AG04449 (cell line): ENCODE measurements at regions of chr1 and their contacts with region 1.

Region 1: DNA sequence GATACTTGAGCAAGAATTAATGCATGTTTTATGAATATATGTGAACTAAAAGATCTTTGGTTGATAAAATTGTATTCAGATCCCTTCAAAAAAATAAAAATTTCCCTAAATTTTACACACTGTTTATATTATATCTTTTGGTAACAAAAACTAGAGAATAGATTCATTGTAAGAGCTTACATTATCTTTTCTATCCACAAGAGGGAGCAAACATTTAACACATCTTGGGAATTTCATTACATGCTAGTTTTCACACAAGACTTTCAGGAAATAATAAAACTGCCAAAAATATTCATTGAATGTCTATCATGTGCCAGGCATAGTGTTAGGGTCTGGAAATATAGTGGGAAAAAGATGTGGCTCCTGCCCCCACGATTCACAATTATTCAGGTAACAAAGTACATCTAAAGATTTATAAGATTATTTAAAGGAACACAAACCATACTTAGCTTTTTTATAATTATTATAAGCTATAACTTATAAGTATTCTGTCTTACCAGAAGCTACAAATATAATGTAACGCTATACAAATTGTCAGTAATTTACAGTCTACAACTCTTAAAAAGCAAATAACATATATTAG is 30.6 kb downstream of the FAF1 start:
- DNase-seq: peak; percentile 5
- H3K4me3 ChIP-seq: no peak overlapping the region
- CTCF ChIP-seq: peak; percentile 20

Region 2: GRCh38 chr1:50774759-50775351 is 154.6 kb before region 1 on chr1:
- CTCF ChIA-PET with region 1: interaction called, 17 read pairs
- POLR2A ChIA-PET with region 1: no interaction called
- DNase-seq: peak; percentile 19
- H3K4me3 ChIP-seq: no peak overlapping the region
- CTCF ChIP-seq: peak; percentile 51

Region 3: DNA sequence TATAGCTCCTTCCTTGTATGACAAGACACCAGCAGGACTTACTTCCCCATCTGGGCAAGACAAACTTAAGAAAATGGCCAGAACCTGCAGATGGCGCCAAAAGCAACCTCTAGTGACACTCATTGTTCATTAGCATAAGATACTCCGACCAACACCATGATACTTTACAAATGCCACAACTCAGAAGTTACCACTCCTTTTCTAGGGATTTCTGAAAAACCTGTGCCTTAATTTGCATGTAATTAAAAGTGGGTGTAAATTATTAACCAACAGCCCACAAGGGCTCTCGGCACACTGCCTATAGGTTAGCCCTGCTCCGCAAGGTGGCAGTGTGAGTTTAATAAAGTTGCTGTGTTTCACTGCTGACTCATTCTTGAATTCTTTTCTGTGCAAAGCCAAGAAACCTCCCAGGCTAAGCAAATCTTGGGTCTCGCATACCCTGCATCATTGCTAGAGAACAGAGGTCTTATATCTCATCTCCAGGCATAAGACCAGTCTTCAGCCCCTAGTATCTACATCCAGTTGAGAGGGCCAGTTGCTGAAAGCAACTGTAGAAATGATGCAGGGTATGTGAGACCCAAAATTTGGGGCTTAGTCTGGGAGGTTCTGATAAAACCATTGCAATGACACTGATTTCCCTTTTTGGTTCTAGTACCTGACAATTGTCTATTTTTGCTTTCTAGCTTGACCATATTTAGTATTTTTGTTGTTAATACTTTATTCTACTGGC is 55.8 kb before region 1 on chr1:
- CTCF ChIA-PET with region 1: interaction called, 13 read pairs
- POLR2A ChIA-PET with region 1: no interaction called
- DNase-seq: no peak
- H3K4me3 ChIP-seq: no peak overlapping the region
- CTCF ChIP-seq: peak; percentile 19

Region 4: DNA sequence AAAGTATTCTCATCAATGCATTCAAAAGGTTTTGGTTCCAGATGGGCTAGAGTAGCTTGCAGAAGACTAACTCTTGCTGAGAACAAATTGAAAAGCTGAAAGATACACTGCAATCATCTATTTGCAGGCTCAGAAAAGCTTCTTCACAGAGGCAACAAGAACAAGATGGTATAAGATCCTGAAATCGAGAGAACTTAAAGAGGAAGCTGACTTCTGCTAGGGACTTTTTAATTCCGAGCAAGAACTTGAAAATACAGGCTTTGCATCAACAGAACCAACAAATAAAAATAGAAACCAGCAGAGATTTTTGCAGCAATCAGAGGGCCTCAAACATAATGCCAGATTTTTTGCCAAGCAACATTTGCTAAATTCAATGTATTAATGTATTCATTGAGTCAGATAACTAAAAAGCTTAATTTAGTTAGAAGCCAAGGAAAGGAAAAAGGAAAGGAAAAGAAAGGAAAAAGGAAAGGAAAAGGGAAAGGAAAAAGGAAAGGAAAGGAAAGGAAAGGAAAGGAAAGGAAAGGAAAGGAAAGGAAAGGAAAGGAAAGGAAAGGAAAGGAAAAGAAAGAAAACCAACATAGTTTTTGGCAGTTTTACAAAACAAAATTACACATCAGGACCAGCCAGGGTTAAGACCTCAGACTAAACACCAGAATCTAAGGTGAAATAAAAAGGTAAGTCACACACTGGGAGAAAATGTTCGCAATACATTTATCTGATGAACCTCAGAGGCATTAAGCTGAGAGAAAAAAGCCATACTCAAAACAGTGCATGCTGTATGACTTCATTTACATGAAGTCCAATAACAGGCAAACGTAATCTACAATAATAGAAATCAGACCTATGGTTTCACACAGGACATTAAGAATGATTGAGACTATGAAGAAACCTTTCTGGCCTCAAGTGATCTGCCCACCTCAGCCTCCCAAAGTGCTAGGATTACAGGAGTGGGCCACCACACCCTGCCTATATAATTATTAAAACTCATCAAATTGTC is 12.0 kb before region 1 on chr1:
- CTCF ChIA-PET with region 1: interaction called, 14 read pairs
- POLR2A ChIA-PET with region 1: no interaction called
- DNase-seq: no peak
- H3K4me3 ChIP-seq: no peak overlapping the region
- CTCF ChIP-seq: no peak

Region 5: DNA sequence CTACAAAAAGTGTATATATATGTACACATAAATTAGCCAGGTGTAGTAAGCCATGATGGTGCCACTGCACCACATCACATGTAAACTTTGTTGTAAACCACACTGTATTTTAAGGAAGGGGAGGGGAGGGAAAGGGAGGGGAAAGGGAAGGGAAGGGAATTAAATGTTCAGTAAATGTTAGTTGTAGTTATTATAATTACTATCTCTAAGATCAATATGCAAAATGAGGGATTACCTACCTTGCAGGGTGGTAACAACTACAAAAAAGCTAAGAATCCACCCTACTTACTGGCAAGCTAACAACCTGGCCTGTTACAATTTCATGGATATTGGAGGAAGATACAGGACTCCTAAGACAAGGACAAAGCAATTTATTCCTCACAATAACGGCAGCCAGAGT is 12.9 kb after region 1 on chr1:
- CTCF ChIA-PET with region 1: interaction called, 46 read pairs
- POLR2A ChIA-PET with region 1: no interaction called
- DNase-seq: no peak
- H3K4me3 ChIP-seq: no peak overlapping the region
- CTCF ChIP-seq: no peak

Region 6: DNA sequence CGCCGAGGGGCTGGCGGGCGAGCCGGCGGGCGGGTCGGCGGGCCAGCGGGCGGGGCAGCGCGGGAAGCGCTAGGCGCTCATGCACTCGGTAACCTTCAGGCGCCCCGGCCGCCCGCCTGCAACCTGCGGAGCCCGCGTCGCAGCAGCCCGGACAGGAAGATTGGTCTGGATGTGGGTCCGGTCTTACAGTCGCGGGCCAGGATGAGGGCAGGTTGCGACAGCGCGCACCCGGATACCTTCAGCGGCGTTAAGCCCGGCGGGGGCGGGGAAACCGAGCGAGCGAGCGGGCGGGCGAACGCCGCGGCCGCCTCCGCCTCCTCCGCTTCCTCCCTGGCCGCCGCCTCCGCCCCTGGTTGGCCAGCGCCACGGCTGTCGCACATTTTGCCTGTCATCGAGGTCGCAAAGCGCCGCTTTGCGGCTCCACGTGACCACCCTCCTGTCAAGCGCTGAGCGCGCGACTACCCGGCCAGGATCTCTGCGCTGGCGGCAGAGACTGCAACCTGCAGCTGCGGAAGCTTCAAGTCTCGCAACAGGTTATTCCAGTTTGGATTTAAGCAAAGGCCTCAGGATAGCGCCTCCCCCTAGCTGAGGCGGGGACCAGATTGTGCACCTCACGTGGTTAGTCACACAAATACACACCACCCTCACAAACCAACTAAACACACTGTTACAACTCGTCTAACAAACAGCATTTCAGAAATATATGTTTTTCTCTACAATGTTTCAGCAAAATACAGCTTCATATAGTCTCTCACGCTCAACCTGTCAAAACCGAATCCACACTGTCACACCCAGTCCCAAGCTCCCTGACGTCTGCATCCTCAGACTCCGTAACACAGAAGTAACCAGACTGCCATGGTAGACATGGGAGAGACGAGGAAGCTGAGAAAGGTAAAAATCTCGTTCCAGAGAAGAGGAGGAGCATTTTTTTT is 30.7 kb after region 1 on chr1 and contains the start of gene FAF1:
- CTCF ChIA-PET with region 1: interaction called, 10 read pairs
- POLR2A ChIA-PET with region 1: no interaction called
- DNase-seq: peak; percentile 61
- H3K4me3 ChIP-seq: peak within 1 kb of the TSS; percentile 87
- CTCF ChIP-seq: peak; percentile 5